Naive thymus-derived CD4-positive, alpha-beta T cell (primary cell): ENCODE measurements at regions of chr1 and their contacts with region 1.

Region 1: GRCh38 chr1:51044834-51045233 is 57.2 kb upstream of the C1orf185 start:
- DNase-seq: peak in 3 of 9 donors; percentile 1 to 8 (median 7)
- ATAC-seq: no peak
- H3K4me3 ChIP-seq: no peak overlapping the region
- H3K4me3 Mint-ChIP-seq: no peak overlapping the region
- H3K27ac ChIP-seq: no peak overlapping the region
- H3K27ac Mint-ChIP-seq: no peak overlapping the region
- H3K4me1 ChIP-seq: no peaks in the 10 kb centered on the region
- H3K4me1 Mint-ChIP-seq: no peaks in the 10 kb centered on the region
- H3K27me3 ChIP-seq: no peaks in the 10 kb centered on the region
- H3K27me3 Mint-ChIP-seq: peaks cover 0 to 18% (median 10%) of the 10 kb centered on the region in 5 donors

Region 2: GRCh38 chr1:50774759-50775351 is 270.0 kb before region 1 on chr1:
- CTCF ChIA-PET with region 1: no interaction called
- POLR2A ChIA-PET with region 1: no interaction called
- intact Hi-C with region 1: loop called in 1 of 2 experiments (anchors 1 kb)
- DNase-seq: peak in 7 of 9 donors; percentile 7 to 53 (median 36)
- ATAC-seq: peak; percentile 54
- H3K4me3 ChIP-seq: no peak overlapping the region
- H3K4me3 Mint-ChIP-seq: no peak overlapping the region
- H3K27ac ChIP-seq: no peak overlapping the region
- H3K27ac Mint-ChIP-seq: no peak overlapping the region
- H3K4me1 ChIP-seq: no peaks in the 10 kb centered on the region
- H3K4me1 Mint-ChIP-seq: peaks cover 4 to 22% (median 13%) of the 10 kb centered on the region in 7 donors
- H3K27me3 ChIP-seq: no peaks in the 10 kb centered on the region
- H3K27me3 Mint-ChIP-seq: no peaks in the 10 kb centered on the region

Region 3: DNA sequence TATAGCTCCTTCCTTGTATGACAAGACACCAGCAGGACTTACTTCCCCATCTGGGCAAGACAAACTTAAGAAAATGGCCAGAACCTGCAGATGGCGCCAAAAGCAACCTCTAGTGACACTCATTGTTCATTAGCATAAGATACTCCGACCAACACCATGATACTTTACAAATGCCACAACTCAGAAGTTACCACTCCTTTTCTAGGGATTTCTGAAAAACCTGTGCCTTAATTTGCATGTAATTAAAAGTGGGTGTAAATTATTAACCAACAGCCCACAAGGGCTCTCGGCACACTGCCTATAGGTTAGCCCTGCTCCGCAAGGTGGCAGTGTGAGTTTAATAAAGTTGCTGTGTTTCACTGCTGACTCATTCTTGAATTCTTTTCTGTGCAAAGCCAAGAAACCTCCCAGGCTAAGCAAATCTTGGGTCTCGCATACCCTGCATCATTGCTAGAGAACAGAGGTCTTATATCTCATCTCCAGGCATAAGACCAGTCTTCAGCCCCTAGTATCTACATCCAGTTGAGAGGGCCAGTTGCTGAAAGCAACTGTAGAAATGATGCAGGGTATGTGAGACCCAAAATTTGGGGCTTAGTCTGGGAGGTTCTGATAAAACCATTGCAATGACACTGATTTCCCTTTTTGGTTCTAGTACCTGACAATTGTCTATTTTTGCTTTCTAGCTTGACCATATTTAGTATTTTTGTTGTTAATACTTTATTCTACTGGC is 171.2 kb before region 1 on chr1:
- CTCF ChIA-PET with region 1: no interaction called
- POLR2A ChIA-PET with region 1: no interaction called
- intact Hi-C with region 1: loop called in 1 of 2 experiments (anchors 1 kb)
- DNase-seq: peak in 8 of 9 donors; percentile 7 to 45 (median 23)
- ATAC-seq: peak; percentile 84
- H3K4me3 ChIP-seq: peak overlapping the region; percentile 25
- H3K4me3 Mint-ChIP-seq: peak overlapping the region in 1 of 10 donors; percentile 54
- H3K27ac ChIP-seq: no peak overlapping the region
- H3K27ac Mint-ChIP-seq: no peak overlapping the region
- H3K4me1 ChIP-seq: no peaks in the 10 kb centered on the region
- H3K4me1 Mint-ChIP-seq: peaks cover 8 to 28% (median 14%) of the 10 kb centered on the region in 7 donors
- H3K27me3 ChIP-seq: no peaks in the 10 kb centered on the region
- H3K27me3 Mint-ChIP-seq: no peaks in the 10 kb centered on the region

Region 4: DNA sequence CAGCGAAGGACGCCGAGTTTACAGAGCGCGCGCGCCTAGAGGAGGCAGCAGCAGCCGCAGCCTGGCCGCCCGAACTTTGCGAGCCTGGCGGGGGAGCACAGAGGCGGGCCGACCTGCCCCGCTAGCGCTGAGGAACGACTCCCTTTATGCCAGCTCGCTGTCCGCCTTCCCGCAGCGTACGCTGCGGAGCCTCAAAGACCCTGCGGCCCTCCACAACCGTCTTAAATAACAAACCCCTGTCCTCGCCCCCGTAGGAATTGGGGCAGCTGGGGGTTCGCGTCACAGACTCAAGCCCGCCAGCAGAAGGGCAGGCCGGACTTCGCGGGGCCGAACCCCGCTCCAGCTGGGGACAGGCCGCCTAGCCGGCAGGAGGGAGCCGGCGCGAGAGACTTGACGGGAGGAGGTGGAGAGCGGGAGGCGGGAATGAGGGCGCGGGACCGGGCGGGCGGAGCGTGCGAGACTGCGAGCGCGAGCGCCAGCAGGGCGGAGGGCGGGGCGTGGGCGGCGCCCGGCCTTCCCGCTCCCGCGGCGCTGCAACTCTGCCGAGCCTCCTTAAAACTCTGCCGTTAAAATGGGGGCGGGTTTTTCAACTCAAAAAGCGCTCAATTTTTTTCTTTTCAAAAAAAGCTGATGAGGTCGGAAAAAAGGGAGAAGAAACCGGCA is 76.5 kb before region 1 on chr1:
- CTCF ChIA-PET with region 1: no interaction called
- POLR2A ChIA-PET with region 1: no interaction called
- intact Hi-C with region 1: no loop called
- DNase-seq: peak; percentile 67 to 86 (median 85)
- ATAC-seq: peak; percentile 89
- H3K4me3 ChIP-seq: peak overlapping the region; percentile 83
- H3K4me3 Mint-ChIP-seq: peak overlapping the region; percentile 92 to 99 (median 98)
- H3K27ac ChIP-seq: peak overlapping the region; percentile 96
- H3K27ac Mint-ChIP-seq: peak overlapping the region; percentile 71 to 100 (median 91)
- H3K4me1 ChIP-seq: peaks cover 6 to 15% of the 10 kb centered on the region in 2 donors
- H3K4me1 Mint-ChIP-seq: peaks cover 18 to 29% (median 26%) of the 10 kb centered on the region in 7 donors
- H3K27me3 ChIP-seq: no peaks in the 10 kb centered on the region
- H3K27me3 Mint-ChIP-seq: peaks cover 0 to 12% (median 2%) of the 10 kb centered on the region in 5 donors

Region 5: GRCh38 chr1:52190500-52191252 is 1145.8 kb after region 1 on chr1:
- CTCF ChIA-PET with region 1: no interaction called
- POLR2A ChIA-PET with region 1: no interaction called
- intact Hi-C with region 1: no loop called
- DNase-seq: no peak
- ATAC-seq: no peak
- H3K4me3 ChIP-seq: no peak overlapping the region
- H3K4me3 Mint-ChIP-seq: no peak overlapping the region
- H3K27ac ChIP-seq: no peak overlapping the region
- H3K27ac Mint-ChIP-seq: no peak overlapping the region
- H3K4me1 ChIP-seq: no peaks in the 10 kb centered on the region
- H3K4me1 Mint-ChIP-seq: peaks cover 0 to 4% (median 0%) of the 10 kb centered on the region in 7 donors
- H3K27me3 ChIP-seq: no peaks in the 10 kb centered on the region
- H3K27me3 Mint-ChIP-seq: peaks cover 0 to 7% (median 0%) of the 10 kb centered on the region in 5 donors